ENCODE measurements at regions of chr3 and their contacts with region 1.

Region 1: GRCh38 chr3:156474560-156475389 is 80.1 kb downstream of the SSR3 start:
- DNase-seq: peak; percentile 53
- ATAC-seq: peak; percentile 88
- H3K4me3 Mint-ChIP-seq: peak overlapping the region; percentile 60
- H3K27ac Mint-ChIP-seq: no peak overlapping the region
- H3K4me1 Mint-ChIP-seq: peaks cover 9% of the 10 kb centered on the region
- H3K27me3 Mint-ChIP-seq: no peaks in the 10 kb centered on the region
- CTCF ChIP-seq: 0 out of 2 replicates have a peak, but pooled peaks have one; percentile 26

Region 2: GRCh38 chr3:156151824-156152428 is 322.8 kb before region 1 on chr3:
- CTCF ChIA-PET with region 1: interaction called, 23 read pairs
- POLR2A ChIA-PET with region 1: no interaction called
- DNase-seq: peak; percentile 77
- ATAC-seq: peak; percentile 94
- H3K4me3 Mint-ChIP-seq: no peak overlapping the region
- H3K27ac Mint-ChIP-seq: no peak overlapping the region
- H3K4me1 Mint-ChIP-seq: peaks cover 12% of the 10 kb centered on the region
- H3K27me3 Mint-ChIP-seq: no peaks in the 10 kb centered on the region
- CTCF ChIP-seq: peak; percentile 84

Region 3: DNA sequence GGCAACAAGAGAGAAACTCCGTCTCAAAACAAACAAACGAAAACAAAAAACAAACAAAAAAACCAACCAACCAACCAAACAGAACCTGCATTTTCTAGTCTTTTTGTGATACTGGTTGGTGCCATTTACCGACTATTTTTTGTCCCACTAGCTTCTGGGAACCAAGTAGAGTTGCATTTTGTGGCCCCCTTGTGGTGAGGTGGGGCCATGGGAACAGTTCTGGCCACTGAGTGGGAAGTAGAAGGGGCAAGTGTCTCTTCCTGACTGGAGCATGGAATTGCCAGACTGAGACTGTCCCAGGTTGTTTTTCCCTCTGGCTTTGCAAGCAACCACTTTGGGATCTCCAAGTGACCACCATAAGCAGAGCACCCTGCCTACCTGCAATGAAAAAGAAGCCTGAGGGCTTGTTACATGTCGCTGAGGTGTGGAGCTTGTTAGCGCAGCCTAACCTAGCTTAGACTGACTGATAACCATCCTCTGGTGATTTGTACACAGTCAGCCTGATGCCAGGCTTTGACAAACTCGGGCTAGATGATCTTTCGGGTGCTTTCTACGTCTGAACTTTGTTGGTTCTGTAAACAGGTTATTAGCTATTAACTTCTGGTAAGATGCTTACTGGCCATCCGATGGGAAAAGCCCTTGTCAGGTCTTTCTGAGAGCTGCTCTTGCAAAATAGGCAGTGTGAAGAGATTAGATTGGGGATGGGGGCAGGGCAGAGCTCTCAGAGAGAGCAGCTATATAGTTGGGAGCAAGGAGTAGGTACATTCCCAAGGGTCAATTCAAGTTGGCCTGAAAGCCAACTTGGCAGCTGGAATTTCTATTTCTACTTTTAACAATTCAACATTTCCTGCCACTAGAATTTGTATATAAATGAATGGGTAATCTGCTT is 92.1 kb before region 1 on chr3:
- CTCF ChIA-PET with region 1: interaction called, 18 read pairs
- POLR2A ChIA-PET with region 1: no interaction called
- DNase-seq: peak; percentile 70
- ATAC-seq: peak; percentile 92
- H3K4me3 Mint-ChIP-seq: no peak overlapping the region
- H3K27ac Mint-ChIP-seq: no peak overlapping the region
- H3K4me1 Mint-ChIP-seq: peaks cover 4% of the 10 kb centered on the region
- H3K27me3 Mint-ChIP-seq: peaks cover 7% of the 10 kb centered on the region
- CTCF ChIP-seq: peak; percentile 73

Region 4: DNA sequence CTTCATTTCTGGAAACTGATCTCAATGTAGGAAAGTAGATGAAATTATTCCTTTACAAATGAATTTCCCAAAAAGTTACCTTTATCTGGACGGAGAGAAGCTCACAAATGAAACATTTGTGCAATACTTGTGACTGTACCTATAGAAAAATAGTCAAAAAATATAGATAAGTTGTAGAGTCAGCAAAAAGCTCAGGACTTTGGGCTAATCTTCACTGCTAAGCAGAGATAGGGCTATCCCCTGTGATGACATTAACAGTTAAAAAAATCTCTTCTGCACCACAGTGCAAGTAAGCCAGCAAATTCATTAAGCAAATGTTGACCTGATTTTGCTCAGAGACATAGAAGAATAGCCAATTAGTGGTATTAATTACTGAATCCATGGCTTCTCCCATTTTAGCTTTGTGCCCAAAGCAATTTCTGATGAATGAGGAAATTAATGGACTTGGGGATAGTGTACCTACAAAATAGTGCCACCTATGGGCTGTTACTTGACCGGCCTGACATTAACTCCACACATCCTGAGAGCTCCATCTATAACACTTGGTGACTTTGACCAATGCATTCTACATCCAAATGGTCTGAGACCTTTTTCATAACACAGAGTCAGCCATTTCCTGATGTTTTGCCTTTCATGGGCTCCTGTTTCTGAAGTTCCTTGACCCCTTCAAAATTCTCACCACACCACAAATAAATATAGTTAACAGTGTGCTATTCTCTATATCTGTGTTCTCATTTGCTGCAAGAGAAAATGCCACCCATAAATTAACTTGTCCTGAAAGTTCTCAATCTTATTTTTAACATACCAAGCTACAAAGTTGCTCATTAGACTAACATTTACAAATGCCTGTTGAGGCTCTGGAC is 24.8 kb before region 1 on chr3:
- CTCF ChIA-PET with region 1: interaction called, 57 read pairs
- POLR2A ChIA-PET with region 1: no interaction called
- DNase-seq: peak; percentile 18
- ATAC-seq: peak; percentile 79
- H3K4me3 Mint-ChIP-seq: no peak overlapping the region
- H3K27ac Mint-ChIP-seq: no peak overlapping the region
- H3K4me1 Mint-ChIP-seq: peaks cover 2% of the 10 kb centered on the region; the same call in 1 of the 2 replicates
- H3K27me3 Mint-ChIP-seq: no peaks in the 10 kb centered on the region; the same call in 1 of the 2 replicates
- CTCF ChIP-seq: peak; percentile 40

Region 5: GRCh38 chr3:156492801-156493261 is 18.1 kb after region 1 on chr3:
- CTCF ChIA-PET with region 1: interaction called, 20 read pairs
- POLR2A ChIA-PET with region 1: no interaction called
- DNase-seq: no peak
- ATAC-seq: no peak
- H3K4me3 Mint-ChIP-seq: no peak overlapping the region
- H3K27ac Mint-ChIP-seq: no peak overlapping the region
- H3K4me1 Mint-ChIP-seq: no peaks in the 10 kb centered on the region
- H3K27me3 Mint-ChIP-seq: no peaks in the 10 kb centered on the region
- CTCF ChIP-seq: no peak